ENCODE measurements at regions of chr20 and their contacts with region 1.

Region 1: GRCh38 chr20:49775229-49775693 is 37.4 kb upstream of the SLC9A8 start:
- DNase-seq: peak; percentile 80
- H3K4me3 ChIP-seq: no peak overlapping the region
- H3K27ac ChIP-seq: peak overlapping the region; percentile 63 to 77 (median 74)
- H3K4me1 ChIP-seq: peaks cover 7 to 52% (median 24%) of the 10 kb centered on the region in 4 donors
- H3K27me3 ChIP-seq: no peaks in the 10 kb centered on the region
- CTCF ChIP-seq: no peak
- EP300 ChIP-seq: peak; percentile 38
- POLR2A ChIP-seq: peak; percentile 50

Region 2: DNA sequence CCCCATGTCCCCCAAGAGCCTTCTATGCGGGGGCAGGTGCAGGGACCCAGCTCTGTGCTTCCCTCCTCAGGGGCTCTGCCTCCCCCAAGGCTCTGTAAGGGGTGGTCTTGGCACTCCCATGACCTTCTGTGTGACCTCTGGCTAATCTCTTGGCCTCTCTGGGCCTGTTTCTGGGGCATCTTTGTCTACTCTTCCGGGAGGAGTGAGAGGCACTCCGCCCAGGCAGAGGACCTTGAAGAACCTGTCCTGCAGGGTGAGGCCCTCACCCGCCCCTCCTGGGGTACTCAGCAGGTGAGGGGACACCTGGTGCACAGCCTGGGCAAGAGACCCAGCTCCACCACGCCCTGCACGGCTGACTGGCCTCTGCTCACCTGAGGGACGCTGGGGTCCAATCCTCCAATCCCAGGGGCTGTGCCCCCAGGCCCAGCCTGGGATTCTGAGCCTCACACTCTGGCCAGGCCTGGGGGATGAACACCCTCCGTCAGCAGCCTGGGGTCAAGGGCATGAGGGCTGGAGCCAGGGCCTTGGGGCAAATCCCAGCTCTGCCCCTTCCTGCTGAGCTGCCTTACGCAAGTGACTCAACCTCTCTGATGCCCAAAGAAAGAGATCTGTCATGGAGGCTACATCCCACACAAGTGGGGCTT is 584.9 kb after region 1 on chr20:
- in situ Hi-C with region 1: no loop called
- intact Hi-C with region 1: loop called (anchors 5 kb)
- DNase-seq: peak; percentile 76
- H3K4me3 ChIP-seq: no peak overlapping the region
- H3K27ac ChIP-seq: peak overlapping the region in 1 of 4 donors; percentile 40
- H3K4me1 ChIP-seq: peaks cover 0 to 23% (median 13%) of the 10 kb centered on the region in 4 donors
- H3K27me3 ChIP-seq: no peaks in the 10 kb centered on the region
- CTCF ChIP-seq: no peak
- EP300 ChIP-seq: no peak
- POLR2A ChIP-seq: no peak